ENCODE measurements at regions of chr9 and their contacts with region 1.

Region 1: GRCh38 chr9:122904823-122905710 is at the start of gene RC3H2:
- DNase-seq: peak; percentile 99
- H3K4me3 Mint-ChIP-seq: peak within 1 kb of the TSS; percentile 89
- H3K27ac Mint-ChIP-seq: peak within 1 kb of the TSS; percentile 94
- H3K4me1 Mint-ChIP-seq: peaks cover 18% of the 10 kb centered on the region
- H3K27me3 Mint-ChIP-seq: no peaks in the 10 kb centered on the region
- total RNA-seq, gene RC3H2: 20.2 to 21.3 TPM

Region 2: DNA sequence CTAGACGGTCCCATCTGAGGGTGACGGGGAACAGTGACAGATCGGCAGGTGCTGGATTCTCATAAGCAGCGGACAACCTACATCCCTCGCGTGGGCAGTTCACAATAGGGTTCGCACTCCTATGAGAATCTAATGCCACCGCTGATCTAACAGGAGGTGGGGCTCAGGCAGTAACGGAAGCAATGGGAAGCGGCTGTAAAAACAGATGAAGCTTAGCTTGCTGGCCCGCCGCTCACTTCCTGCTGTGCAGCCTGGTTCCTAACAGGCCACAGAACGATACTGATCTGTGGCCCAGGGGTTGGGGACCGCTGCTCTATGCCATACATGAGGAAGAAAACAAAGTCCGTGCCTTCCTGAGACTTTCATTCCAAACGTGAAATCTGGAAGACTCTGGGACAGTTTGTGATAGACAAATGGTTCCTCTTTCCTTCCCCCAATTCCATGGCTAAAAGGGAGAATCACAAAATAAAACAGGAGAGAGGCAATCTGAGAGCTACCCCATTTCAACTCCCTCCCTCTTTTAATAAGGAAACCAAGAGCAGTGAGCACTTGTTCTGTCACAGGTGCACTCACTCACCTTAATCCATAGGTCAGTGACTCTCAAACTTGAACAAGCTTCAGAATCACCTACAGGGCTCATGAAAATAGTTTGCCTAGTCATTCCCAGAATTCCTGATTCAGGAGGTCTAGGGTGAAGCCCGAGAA is 88.8 kb before region 1 on chr9:
- CTCF ChIA-PET with region 1: no interaction called
- intact Hi-C with region 1: loop called (anchors 2 kb)
- DNase-seq: peak; percentile 66
- H3K4me3 Mint-ChIP-seq: peak overlapping the region; percentile 65
- H3K27ac Mint-ChIP-seq: peak overlapping the region; percentile 89
- H3K4me1 Mint-ChIP-seq: peaks cover 22% of the 10 kb centered on the region
- H3K27me3 Mint-ChIP-seq: no peaks in the 10 kb centered on the region

Region 3: GRCh38 chr9:122846371-122846940 is 58.6 kb before region 1 on chr9:
- CTCF ChIA-PET with region 1: no interaction called
- intact Hi-C with region 1: loop called (anchors 2 kb)
- DNase-seq: no peak
- H3K4me3 Mint-ChIP-seq: no peak overlapping the region
- H3K27ac Mint-ChIP-seq: peak overlapping the region; percentile 79
- H3K4me1 Mint-ChIP-seq: peaks cover 28% of the 10 kb centered on the region
- H3K27me3 Mint-ChIP-seq: no peaks in the 10 kb centered on the region

Region 4: GRCh38 chr9:122931226-122932121 is 26.4 kb after region 1 on chr9 and contains the start of gene ZBTB26:
- CTCF ChIA-PET with region 1: interaction called, 3 read pairs
- intact Hi-C with region 1: loop called (anchors 1 kb)
- DNase-seq: peak; percentile 93
- H3K4me3 Mint-ChIP-seq: no peak within 1 kb of the TSS
- H3K27ac Mint-ChIP-seq: peak within 1 kb of the TSS; percentile 84
- H3K4me1 Mint-ChIP-seq: peaks cover 10% of the 10 kb centered on the region
- H3K27me3 Mint-ChIP-seq: no peaks in the 10 kb centered on the region
- total RNA-seq, gene ZBTB26: 5.5 to 5.7 TPM

Region 5: DNA sequence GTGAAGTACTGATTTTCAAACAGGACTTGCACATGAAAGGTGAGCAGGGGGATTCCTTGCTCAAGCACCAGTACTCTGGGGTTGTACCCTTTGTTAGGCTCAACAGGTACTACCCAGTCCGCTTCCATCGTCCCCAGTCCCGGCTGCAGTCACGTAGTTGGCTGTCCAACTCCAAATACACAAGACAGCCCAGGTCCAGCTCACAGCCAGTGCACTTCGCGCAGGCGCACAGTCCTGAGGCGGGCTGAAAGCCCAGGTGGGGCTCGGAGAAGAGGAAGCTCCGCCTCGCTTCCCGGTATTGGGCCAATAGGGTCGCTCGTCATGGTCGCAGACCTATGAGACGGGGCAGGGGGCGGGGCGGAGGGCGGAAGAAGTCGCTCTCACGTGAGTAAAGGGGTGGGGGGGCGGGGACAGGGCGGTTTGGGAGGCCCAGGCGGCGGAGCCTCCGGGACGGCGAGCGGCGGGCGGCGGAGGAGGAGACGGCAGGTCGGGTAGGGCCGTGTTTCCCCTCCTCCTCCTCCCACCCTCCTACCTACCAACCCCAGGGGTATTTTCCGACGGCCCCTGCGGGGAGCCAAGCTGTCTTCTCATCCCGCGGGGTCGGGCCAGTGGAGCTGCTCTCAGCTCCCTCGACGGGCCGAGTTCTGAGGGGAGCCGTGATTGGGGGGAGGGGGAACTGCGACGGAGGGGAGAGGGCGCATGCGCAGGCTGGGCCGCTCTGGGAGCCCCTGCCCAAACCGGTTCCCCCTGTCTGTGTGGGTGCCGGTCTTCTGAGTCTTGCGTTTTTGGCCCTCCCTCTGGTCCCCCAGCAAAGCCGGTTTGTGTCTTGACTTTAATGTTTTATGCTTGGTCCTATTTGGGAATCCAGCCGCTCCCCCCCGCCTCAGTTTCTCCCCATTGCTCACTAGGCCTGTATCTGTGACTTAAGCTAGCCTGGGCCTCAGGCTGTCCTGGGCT is 35.8 kb after region 1 on chr9 and contains the start of gene RABGAP1:
- CTCF ChIA-PET with region 1: no interaction called
- intact Hi-C with region 1: loop called (anchors 1 kb)
- DNase-seq: peak; percentile 99
- H3K4me3 Mint-ChIP-seq: peak within 1 kb of the TSS; percentile 96
- H3K27ac Mint-ChIP-seq: peak within 1 kb of the TSS; percentile 83
- H3K4me1 Mint-ChIP-seq: peaks cover 37% of the 10 kb centered on the region
- H3K27me3 Mint-ChIP-seq: no peaks in the 10 kb centered on the region
- total RNA-seq, gene RABGAP1: 19.7 to 21.3 TPM

Region 6: GRCh38 chr9:123453831-123454321 is 548.8 kb after region 1 on chr9:
- CTCF ChIA-PET with region 1: no interaction called
- intact Hi-C with region 1: no loop called
- DNase-seq: no peak
- H3K4me3 Mint-ChIP-seq: no peak overlapping the region
- H3K27ac Mint-ChIP-seq: no peak overlapping the region
- H3K4me1 Mint-ChIP-seq: no peaks in the 10 kb centered on the region
- H3K27me3 Mint-ChIP-seq: no peaks in the 10 kb centered on the region